ENCODE measurements at regions of chr1 and their contacts with region 1.

Region 1: GRCh38 chr1:225554216-225554812 is 98.6 kb downstream of the ENAH start:
- DNase-seq: peak in 1 of 2 donors; percentile 46
- H3K4me3 ChIP-seq: no peak overlapping the region
- H3K27ac ChIP-seq: no peak overlapping the region
- H3K4me1 ChIP-seq: peaks cover 0 to 27% (median 0%) of the 10 kb centered on the region in 4 donors
- H3K27me3 ChIP-seq: no peaks in the 10 kb centered on the region
- CTCF ChIP-seq: peak in 4 of 7 experiments; percentile 42 to 61 (median 47)
- EP300 ChIP-seq: no peak
- POLR2A ChIP-seq: no peak

Region 2: DNA sequence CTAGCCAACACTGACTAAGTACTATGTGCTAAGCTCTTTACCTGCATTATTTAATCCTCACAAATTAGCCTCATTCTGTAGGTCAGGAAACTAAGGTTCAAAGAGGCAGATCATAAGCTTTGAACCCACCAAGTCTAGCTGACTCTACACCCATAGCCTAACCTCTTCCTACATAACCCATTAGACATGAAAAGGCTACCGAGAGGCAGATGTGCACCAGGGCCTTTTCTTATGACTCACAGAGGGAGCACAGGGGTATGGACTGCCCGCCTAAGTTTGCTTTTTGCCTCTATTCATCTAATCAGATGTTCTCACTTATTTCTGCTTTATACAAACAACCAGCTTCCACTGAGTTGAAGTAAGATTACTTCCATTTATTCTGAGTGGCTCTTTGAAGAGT is 158.0 kb before region 1 on chr1:
- intact Hi-C with region 1: no loop called
- DNase-seq: no peak
- H3K4me3 ChIP-seq: no peak overlapping the region
- H3K27ac ChIP-seq: no peak overlapping the region
- H3K4me1 ChIP-seq: no peaks in the 10 kb centered on the region
- H3K27me3 ChIP-seq: no peaks in the 10 kb centered on the region
- CTCF ChIP-seq: no peak
- EP300 ChIP-seq: no peak
- POLR2A ChIP-seq: no peak

Region 3: DNA sequence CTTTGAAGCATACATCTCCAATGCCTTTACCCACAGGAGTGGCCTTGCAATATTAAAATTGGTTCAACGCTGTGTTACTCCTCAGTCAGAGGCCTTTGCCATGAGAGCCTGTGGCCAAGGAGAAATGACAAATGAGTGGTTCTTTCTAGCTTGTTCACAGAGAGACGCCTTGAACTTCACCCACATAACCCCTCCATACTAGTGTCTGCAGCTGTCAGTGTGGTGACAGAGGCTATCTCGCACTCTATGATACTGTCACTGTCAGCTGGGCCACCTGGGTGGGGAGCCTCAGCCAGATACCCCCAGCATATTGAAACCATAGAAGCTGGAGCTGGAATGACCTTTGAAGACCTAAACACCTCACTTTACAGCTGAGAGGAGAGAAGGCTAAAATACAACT is 69.1 kb before region 1 on chr1:
- intact Hi-C with region 1: no loop called
- DNase-seq: no peak
- H3K4me3 ChIP-seq: no peak overlapping the region
- H3K27ac ChIP-seq: peak overlapping the region in 1 of 5 donors; percentile 70
- H3K4me1 ChIP-seq: peaks cover 0 to 44% (median 9%) of the 10 kb centered on the region in 4 donors
- H3K27me3 ChIP-seq: no peaks in the 10 kb centered on the region
- CTCF ChIP-seq: no peak
- EP300 ChIP-seq: no peak
- POLR2A ChIP-seq: no peak

Region 4: DNA sequence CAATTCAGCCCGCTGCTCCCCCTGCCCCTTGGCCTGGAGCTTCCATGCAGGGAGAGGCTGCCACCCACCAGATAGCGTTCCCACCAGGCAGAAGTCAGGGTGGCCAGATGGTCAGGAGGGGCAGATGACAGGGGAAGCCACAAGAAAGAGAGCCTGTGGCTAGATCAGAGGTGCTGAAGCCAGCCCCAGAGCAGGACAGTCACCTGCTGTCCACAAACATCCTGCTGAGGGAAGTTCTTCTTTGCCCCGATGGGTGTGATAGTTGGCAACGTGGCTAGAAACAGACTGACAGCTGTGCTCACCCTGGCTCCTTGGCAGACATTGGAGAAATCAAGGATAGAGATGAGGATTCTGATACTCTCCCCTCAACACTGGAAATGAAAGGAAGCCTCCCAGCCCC is 196.1 kb after region 1 on chr1:
- intact Hi-C with region 1: no loop called
- DNase-seq: no peak
- H3K4me3 ChIP-seq: no peak overlapping the region
- H3K27ac ChIP-seq: no peak overlapping the region
- H3K4me1 ChIP-seq: peaks cover 31 to 58% (median 37%) of the 10 kb centered on the region in 4 donors
- H3K27me3 ChIP-seq: no peaks in the 10 kb centered on the region
- CTCF ChIP-seq: no peak
- EP300 ChIP-seq: no peak
- POLR2A ChIP-seq: no peak

Region 5: DNA sequence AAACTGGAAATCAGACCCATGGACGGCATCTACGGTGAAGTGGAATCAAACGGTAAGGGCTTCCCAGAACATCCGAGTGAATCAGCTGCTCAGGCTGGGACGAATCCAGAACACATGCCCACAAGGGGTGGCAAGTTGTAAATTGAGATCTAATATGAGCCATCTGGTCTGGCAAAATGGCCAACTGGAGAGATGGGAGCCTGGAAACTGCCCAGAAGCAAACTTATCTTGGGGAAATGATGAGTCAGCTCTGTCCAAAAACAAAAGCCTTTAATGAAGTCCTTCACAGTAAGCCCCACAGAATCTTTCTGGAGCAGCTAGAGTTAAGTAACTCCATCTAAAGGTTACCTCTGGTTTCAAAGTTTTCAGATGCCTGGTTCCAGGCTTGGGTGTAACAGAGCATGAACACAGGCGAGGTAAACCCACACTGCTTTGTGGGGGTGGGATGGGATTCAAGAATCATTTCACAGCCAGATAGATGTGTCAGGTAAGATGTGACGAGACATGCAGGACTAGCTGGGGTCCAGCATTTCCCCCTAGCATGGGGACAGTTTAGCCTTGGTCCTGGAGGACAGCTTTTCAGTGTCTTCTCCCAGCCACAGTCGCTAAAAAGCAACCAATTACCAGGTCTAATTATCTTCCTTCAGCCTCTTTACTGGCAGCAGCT is 212.8 kb after region 1 on chr1:
- intact Hi-C with region 1: loop called (anchors 10 kb)
- DNase-seq: peak; percentile 23 to 67
- H3K4me3 ChIP-seq: no peak overlapping the region
- H3K27ac ChIP-seq: peak overlapping the region; percentile 27 to 81 (median 54)
- H3K4me1 ChIP-seq: peaks cover 37 to 84% (median 60%) of the 10 kb centered on the region in 4 donors
- H3K27me3 ChIP-seq: no peaks in the 10 kb centered on the region
- CTCF ChIP-seq: no peak
- EP300 ChIP-seq: no peak
- POLR2A ChIP-seq: no peak

Region 6: DNA sequence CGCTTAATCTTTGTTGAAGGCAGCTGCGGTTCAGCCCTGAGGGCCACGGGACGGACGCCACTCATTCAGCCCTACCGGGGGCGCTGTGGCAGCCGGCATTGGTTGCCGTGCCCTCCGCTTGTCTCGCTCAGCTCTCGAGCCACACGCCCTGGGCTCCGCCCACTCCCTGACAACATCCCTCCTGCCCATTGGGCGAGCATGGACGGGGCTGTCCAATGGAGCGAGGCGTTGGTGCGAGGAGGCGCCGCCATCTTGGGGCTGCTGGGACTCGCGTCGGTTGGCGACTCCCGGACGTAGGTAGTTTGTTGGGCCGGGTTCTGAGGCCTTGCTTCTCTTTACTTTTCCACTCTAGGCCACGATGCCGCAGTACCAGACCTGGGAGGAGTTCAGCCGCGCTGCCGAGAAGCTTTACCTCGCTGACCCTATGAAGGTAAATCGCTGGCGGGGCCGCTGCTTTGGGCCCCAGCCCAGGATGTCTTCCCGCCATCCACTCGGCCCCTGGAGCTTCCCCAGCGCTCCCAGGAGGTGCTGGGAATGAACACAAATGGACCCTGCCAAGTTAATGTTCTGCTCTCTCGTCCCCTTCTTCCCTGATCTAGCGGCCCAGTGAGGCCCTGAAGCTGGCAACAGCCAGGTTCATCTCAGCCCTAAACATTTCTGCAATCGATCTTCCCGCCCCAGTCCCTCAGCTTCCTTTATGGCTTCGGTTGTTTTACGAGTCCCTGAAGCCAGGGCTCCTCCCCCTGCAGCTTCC is 223.4 kb after region 1 on chr1 and contains the start of gene SRP9:
- intact Hi-C with region 1: no loop called
- DNase-seq: peak; percentile 99 to 100
- H3K4me3 ChIP-seq: peak within 1 kb of the TSS; percentile 63 to 78 (median 68)
- H3K27ac ChIP-seq: peak within 1 kb of the TSS; percentile 91 to 97 (median 93)
- H3K4me1 ChIP-seq: peaks cover 26 to 88% (median 59%) of the 10 kb centered on the region in 4 donors
- H3K27me3 ChIP-seq: no peaks in the 10 kb centered on the region
- CTCF ChIP-seq: peak in 6 of 7 experiments; percentile 13 to 95 (median 82)
- EP300 ChIP-seq: no peak
- POLR2A ChIP-seq: peak in 2 of 4 donors; percentile 39 to 56
- total RNA-seq, gene SRP9: 68.9 to 269 (median 130) TPM